ENCODE measurements at regions of chr11 and their contacts with region 1.

Region 1: DNA sequence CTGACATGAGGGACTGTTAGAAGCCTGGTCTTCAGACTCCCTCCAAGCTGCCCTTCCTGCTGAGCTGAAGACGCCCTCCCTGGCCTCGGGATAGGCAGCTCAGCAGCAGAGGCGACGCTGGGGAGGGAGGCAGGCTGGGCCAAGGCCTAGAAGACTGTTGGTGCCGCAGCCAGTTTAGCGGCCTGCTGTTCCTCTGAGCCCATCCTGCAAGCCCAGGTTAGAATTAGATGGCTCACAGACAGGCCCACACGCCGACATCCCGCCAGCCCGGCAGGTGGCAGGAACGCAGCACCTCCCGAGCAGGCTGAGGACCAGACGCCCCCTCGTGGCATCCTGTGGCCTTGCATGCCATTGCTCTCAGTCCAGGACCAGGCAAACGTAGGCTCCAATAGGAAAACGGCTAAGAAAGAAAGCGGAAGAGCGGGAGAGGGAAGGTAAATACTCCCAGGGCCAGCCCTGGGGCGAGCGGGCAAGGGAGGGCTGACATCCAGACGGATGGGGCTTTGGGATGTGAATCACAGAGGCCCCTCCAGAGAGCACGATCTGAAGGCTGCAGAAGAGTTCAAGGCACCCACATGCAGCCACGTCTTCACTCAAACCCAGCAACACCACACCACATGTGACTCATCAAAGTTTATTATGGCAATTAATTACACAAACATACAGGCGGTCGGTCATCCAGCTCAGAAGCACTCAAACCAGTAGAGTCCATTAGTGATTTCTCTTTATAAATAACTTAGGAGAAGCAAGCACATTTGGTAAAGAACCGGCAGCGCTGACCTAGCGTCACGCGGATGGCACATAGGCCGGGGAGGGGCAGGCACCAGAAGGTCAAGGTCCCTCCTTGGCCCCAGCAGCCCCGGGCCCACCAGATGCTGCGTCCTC is 27.6 kb downstream of the CD5 start:
- DNase-seq: peak; percentile 90 to 94 (median 93)
- H3K4me3 ChIP-seq: peak overlapping the region; percentile 26
- H3K27ac ChIP-seq: peak overlapping the region; percentile 71 to 73
- H3K4me1 ChIP-seq: peaks cover 9% of the 10 kb centered on the region
- H3K27me3 ChIP-seq: no peaks in the 10 kb centered on the region
- CTCF ChIP-seq: peak; percentile 99
- EP300 ChIP-seq: no peak
- POLR2A ChIP-seq: peak; percentile 35

Region 2: DNA sequence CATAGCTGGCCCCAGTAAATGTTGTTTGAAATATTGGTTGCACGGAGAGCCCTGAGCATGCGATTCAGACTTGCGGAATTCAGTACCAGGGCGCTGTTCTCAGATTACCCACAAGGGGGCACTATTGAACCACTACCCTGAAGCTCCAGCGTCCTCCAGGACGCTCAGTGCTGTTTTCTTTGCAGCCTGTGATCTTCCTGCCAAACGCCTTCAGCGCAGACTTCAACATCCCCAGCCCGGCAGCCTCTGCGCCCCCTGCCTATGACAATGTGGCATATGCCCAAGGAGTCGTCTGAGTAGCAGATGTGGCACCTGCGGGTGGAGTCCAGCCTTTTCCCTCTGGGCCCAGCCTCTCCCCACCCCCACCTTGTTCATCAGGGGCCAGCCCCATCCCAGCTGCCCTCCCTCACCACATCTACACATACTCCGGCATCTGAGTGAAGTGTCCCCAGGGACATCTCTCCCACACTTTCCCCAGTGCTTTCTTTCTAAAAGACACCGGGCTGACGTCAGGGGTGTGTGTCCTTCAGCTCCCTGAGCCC is 354.4 kb before region 1 on chr11:
- intact Hi-C with region 1: loop called in 1 of 4 experiments (anchors 10 kb)
- DNase-seq: peak; percentile 87 to 91 (median 89)
- H3K4me3 ChIP-seq: no peak overlapping the region
- H3K27ac ChIP-seq: no peak overlapping the region
- H3K4me1 ChIP-seq: no peaks in the 10 kb centered on the region
- H3K27me3 ChIP-seq: no peaks in the 10 kb centered on the region
- CTCF ChIP-seq: peak; percentile 81 to 92 (median 89)
- EP300 ChIP-seq: no peak
- POLR2A ChIP-seq: no peak

Region 3: GRCh38 chr11:60831143-60831500 is 298.8 kb before region 1 on chr11:
- intact Hi-C with region 1: loop called in 1 of 4 experiments (anchors 10 kb)
- DNase-seq: peak; percentile 71 to 90 (median 85)
- H3K4me3 ChIP-seq: no peak overlapping the region
- H3K27ac ChIP-seq: no peak overlapping the region
- H3K4me1 ChIP-seq: peaks cover 2% of the 10 kb centered on the region
- H3K27me3 ChIP-seq: no peaks in the 10 kb centered on the region
- CTCF ChIP-seq: peak; percentile 83 to 90 (median 90)
- EP300 ChIP-seq: no peak
- POLR2A ChIP-seq: no peak

Region 4: DNA sequence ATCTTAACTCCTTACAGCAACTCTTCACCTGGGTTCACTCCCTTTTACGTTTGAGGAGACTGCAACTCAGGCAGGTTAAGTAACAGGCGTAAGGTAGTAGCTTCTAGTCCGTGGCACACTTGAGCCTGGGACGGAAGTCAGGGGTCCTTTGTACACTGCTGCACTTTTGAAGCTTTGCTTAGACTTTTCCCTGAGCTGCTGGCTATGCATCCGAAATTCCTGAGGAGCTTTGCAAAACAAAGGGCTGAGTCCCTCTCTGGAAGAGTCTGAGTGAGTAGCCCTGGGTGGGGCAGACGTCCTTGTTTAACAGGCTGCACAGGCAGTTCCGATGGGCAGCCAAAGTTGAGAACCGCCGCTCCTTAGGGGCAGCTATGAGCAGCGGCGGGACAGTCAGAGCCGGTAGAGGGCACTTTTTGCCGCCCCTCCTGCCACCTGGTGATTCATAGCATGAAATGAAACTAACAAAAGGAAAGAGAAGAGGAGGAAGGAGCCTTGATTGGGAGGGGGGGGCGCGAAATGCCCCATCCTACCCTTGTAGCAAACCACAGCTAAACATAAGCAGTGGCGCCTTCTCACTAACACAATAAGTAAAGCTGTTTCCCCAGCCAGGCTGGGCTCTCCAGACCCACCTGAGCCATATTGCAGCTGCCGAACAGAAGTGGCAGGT is 214.5 kb before region 1 on chr11:
- intact Hi-C with region 1: loop called in 2 of 4 experiments (anchors 5 kb)
- DNase-seq: peak; percentile 55 to 69 (median 63)
- H3K4me3 ChIP-seq: peak overlapping the region; percentile 50
- H3K27ac ChIP-seq: peak overlapping the region; percentile 54 to 55
- H3K4me1 ChIP-seq: peaks cover 3% of the 10 kb centered on the region
- H3K27me3 ChIP-seq: no peaks in the 10 kb centered on the region
- CTCF ChIP-seq: no peak
- EP300 ChIP-seq: no peak
- POLR2A ChIP-seq: no peak

Region 5: DNA sequence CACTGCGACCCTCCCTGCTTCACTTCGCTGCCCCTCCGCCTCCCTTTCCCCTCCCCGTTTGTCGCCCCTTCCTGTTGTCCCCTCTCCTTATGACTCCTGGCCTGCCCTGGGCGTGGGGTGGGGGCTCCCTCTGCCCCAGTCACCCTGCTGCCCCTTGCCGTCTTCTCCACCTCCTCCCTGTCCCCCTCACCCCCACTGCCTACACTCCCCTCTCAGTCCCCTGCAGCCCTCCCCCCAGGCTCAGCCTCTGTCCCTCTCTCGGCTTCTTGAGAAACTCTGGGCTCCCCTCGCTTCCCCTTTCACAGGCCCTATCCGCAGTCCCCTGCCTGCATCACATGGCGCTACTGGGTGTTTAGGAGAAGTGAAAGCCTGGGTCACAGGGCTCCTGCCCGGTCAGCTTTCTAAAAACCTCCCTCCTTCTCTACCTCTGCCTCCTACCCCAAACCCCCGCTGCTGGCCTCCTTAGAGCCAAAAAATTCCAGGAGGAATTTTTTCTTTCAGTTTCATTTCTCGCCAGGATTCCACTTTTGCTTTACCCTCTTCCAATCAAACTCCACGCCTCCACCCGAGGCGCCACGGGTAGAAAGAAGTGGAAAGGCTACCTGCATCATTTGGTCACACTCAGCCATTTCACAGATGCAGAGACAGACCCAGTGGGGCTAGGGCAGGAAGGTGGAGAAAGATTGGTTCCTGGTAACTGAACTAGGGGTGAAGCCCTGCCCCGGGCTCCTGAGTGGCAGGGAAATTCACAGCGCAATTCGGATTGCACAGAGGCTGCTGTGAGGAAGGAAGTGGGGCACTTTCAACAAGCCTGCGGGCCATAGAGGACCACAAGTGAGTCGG is 177.8 kb before region 1 on chr11 and contains the start of gene SLC15A3:
- intact Hi-C with region 1: loop called in 1 of 4 experiments (anchors 5 kb)
- DNase-seq: peak; percentile 61 to 65 (median 62)
- H3K4me3 ChIP-seq: peak within 1 kb of the TSS; percentile 47
- H3K27ac ChIP-seq: peak within 1 kb of the TSS; percentile 62 to 90
- H3K4me1 ChIP-seq: peaks cover 8% of the 10 kb centered on the region
- H3K27me3 ChIP-seq: no peaks in the 10 kb centered on the region
- CTCF ChIP-seq: no peak
- EP300 ChIP-seq: no peak
- POLR2A ChIP-seq: no peak
- total RNA-seq, gene SLC15A3: 25.3 to 55.8 (median 43.9) TPM

Region 6: GRCh38 chr11:60970369-60970774 is 159.5 kb before region 1 on chr11:
- intact Hi-C with region 1: loop called in 1 of 4 experiments (anchors 2 kb)
- DNase-seq: peak in 4 of 5 donors; percentile 54 to 73 (median 60)
- H3K4me3 ChIP-seq: no peak overlapping the region
- H3K27ac ChIP-seq: no peak overlapping the region
- H3K4me1 ChIP-seq: no peaks in the 10 kb centered on the region
- H3K27me3 ChIP-seq: no peaks in the 10 kb centered on the region
- CTCF ChIP-seq: peak; percentile 60 to 68 (median 68)
- EP300 ChIP-seq: no peak
- POLR2A ChIP-seq: no peak

Region 7: DNA sequence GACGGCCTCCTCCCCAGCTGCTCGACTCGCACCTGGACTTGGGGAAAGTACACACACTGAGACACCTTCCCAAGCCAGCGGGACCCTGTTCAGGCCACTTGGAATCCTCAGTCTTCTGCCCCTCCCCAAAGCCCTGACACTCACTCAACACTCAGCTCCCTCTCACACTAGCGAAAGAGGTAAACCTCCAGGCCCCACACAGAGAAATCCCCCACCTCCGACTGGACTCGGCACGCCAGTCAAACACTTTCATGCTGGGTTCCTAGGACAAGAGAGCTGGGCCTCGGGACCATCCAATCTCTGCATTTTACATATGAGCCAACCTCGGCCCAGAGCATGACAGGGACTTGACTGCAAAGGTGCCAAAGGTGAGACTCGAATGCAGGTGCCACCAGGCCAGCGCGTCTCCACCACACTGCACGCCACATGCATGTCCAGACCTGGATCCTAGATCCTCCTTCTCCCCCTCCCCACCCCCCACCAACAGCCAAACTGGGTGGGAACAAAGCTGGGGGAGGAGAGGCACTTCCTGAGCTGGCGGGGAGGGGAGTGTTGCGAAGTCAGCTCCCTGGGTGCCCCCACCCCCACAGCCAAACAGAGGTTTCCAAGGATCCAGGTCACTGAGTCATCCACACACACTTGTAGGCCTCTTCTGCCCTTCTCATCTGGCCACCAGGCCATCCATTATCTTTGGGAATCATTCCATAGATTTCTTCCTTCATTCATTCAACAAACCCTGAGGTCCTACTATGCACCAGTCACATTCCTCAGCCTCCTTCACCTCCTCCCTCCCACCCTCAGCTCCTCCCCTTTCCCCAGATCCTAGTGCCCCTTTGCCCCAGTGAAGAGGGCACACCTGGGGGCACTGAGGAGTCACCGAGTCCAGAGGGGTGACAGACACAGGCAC is 38.3 kb before region 1 on chr11:
- intact Hi-C with region 1: no loop called
- DNase-seq: no peak
- H3K4me3 ChIP-seq: no peak overlapping the region
- H3K27ac ChIP-seq: no peak overlapping the region
- H3K4me1 ChIP-seq: no peaks in the 10 kb centered on the region
- H3K27me3 ChIP-seq: no peaks in the 10 kb centered on the region
- CTCF ChIP-seq: no peak
- EP300 ChIP-seq: no peak
- POLR2A ChIP-seq: no peak

Measured in ovary (tissue), 10 donors.